Heart right ventricle (tissue), 16 donors: ENCODE measurements at regions of chr22 and their contacts with region 1.

Region 1: DNA sequence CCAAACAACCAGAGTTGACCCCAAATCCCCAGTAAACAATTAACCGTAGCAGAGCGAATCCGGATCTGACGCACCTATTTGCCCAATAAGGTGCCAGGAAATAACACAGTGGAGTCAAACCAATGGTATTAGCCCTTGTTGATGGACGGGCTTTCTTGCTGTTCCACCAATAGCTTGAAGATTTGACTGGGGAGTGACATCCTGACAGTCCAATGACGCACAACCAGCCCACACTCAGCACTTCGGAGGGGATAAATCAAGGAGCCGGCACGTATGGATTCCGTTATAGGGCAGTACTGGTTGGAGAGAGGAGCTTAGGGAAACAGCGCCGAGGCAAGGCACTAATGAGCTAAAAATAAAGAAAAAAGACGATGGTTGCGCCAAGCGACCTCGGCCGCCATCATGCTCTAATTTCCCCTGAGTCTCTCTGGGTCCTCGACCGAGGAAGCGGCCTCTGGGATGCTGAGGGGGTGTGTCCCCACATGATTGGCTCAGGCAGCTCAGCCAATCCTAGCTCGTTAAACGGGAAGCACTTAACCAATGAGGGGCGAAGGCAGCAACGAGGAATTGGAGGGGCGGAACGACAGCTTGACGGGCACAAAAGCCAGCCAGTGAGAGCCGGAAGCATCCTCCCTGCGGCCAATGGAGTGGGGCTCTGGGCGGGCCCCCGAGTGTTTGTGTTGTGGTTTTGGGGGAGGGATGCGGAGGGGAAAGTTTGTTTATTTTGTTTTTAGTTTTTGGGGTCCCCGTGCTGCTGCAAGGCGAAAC is 49.5 kb downstream of the FAM83F start:
- DNase-seq: peak; percentile 97 to 99
- ATAC-seq: peak; percentile 94 to 98 (median 97)
- H3K4me3 ChIP-seq: peak overlapping the region; percentile 40 to 82 (median 67)
- H3K27ac ChIP-seq: peak overlapping the region; percentile 77 to 98 (median 92)
- H3K4me1 ChIP-seq: peaks cover 7 to 63% (median 42%) of the 10 kb centered on the region in 9 donors
- H3K27me3 ChIP-seq: peaks cover 0 to 3% (median 0%) of the 10 kb centered on the region in 7 donors
- CTCF ChIP-seq: no peak

Region 2: GRCh38 chr22:39152511-39153219 is 891.6 kb before region 1 on chr22 and contains the start of gene CBX7:
- intact Hi-C with region 1: loop called in 1 of 10 experiments (anchors 5 kb)
- DNase-seq: peak; percentile 95 to 96
- ATAC-seq: peak; percentile 90 to 93 (median 92)
- H3K4me3 ChIP-seq: peak within 1 kb of the TSS; percentile 87 to 99 (median 94)
- H3K27ac ChIP-seq: peak within 1 kb of the TSS; percentile 83 to 97 (median 95)
- H3K4me1 ChIP-seq: peaks cover 7 to 56% (median 47%) of the 10 kb centered on the region in 9 donors
- H3K27me3 ChIP-seq: peaks cover 0 to 18% (median 0%) of the 10 kb centered on the region in 7 donors
- CTCF ChIP-seq: no peak
- total RNA-seq, gene CBX7: 48.8 to 85.8 (median 76.3) TPM

Region 3: GRCh38 chr22:40177738-40178416 is 133.6 kb after region 1 on chr22 and contains the start of gene TNRC6B:
- intact Hi-C with region 1: loop called in 6 of 10 experiments (anchors 5 to 10 kb)
- DNase-seq: peak in 1 of 2 donors; percentile 90
- ATAC-seq: peak; percentile 96 to 99 (median 98)
- H3K4me3 ChIP-seq: peak within 1 kb of the TSS; percentile 34 to 86 (median 66)
- H3K27ac ChIP-seq: peak within 1 kb of the TSS; percentile 18 to 93 (median 83)
- H3K4me1 ChIP-seq: peaks cover 10 to 69% (median 63%) of the 10 kb centered on the region in 9 donors
- H3K27me3 ChIP-seq: no peaks in the 10 kb centered on the region
- CTCF ChIP-seq: no peak
- total RNA-seq, gene TNRC6B: 36.3 to 62.5 (median 56.0) TPM

Region 4: DNA sequence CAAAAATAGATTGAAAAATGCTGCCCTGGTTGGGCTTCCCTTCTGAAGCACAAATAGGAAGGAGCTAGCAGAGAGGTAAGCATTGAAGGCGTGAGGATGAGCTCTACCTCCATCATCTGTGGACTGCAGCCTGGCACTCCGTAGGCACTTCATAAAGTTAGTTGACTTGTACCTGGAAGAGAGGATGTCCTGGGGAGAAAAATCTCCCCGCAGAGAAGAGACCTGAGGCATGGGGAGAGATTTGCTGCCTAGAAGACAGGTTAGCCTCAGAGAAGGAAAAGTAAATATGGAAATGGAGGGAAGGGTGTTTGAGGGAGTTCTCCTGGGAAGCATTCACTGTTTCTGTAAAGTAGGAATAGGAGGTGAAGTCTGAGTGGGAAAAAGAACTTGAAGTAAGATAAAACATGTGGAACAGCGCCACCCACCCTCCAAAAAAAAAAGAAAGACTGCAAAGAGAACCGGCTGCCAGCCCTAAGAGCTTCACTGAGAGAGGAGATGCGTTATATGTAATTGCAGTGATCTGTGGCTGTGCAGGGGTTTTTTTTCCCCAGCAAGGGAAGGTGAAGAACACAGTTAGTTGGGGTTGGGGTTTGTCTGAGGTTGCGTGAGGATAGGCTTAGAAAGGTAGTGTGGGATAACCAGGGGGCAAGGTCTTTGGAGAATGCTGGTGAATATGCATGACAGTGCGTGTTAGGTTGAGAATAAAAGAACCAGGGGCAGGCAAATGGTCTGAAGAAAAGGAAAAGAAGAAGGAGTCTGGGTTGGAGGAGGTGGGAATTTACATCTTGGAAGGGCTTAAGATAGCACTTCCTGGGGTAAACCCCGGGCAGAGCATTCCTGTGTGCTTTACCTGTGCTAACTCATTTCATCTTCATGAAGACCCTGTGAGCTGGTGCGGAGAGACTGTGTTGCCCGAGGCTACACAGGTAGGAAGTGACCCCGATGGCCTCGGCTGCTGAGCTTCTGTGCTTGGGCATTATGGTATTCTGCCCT is 149.4 kb after region 1 on chr22:
- intact Hi-C with region 1: loop called in 4 of 10 experiments (anchors 10 kb)
- DNase-seq: no peak
- ATAC-seq: peak in 5 of 8 donors; percentile 4 to 37 (median 29)
- H3K4me3 ChIP-seq: no peak overlapping the region
- H3K27ac ChIP-seq: peak overlapping the region in 1 of 10 donors; percentile 23
- H3K4me1 ChIP-seq: peaks cover 7 to 98% (median 79%) of the 10 kb centered on the region in 9 donors
- H3K27me3 ChIP-seq: no peaks in the 10 kb centered on the region
- CTCF ChIP-seq: peak in 7 of 9 donors; percentile 6 to 47 (median 41)

Region 5: GRCh38 chr22:40346178-40347118 is 302.2 kb after region 1 on chr22 and contains the start of gene ADSL:
- intact Hi-C with region 1: loop called in 8 of 10 experiments (anchors 1 to 10 kb)
- DNase-seq: peak; percentile 90
- ATAC-seq: peak; percentile 98 to 99 (median 98)
- H3K4me3 ChIP-seq: peak within 1 kb of the TSS; percentile 56 to 89 (median 68)
- H3K27ac ChIP-seq: peak within 1 kb of the TSS; percentile 51 to 94 (median 87)
- H3K4me1 ChIP-seq: peaks cover 0 to 31% (median 21%) of the 10 kb centered on the region in 9 donors
- H3K27me3 ChIP-seq: no peaks in the 10 kb centered on the region
- CTCF ChIP-seq: peak in 4 of 9 donors; percentile 14 to 41 (median 37)
- total RNA-seq, gene ADSL: 45.9 to 65.5 (median 53.9) TPM